ENCODE measurements at regions of chr16 and their contacts with region 1.

Region 1: DNA sequence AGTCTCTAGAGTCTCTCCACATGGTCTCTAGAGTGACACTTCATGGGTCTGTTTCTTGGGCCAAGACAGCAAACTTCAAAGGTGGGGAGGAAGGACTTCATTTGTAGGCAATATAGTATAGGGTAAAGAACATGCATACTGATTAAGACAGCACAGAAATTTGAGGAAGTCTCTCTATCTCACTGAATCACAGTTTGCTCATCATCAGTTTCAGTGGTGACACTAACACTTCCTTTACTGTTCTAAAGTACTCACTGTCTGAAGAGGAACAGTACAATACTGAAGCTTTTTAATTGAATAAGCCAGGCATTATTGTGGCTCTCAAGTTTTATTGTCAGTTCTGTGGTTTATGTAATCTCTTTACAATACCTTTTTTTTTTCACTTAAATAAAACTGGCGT is 656.4 kb upstream of the CDH8 start:
- DNase-seq: no peak
- ATAC-seq: no peak
- H3K4me3 ChIP-seq: no peak overlapping the region
- H3K4me3 Mint-ChIP-seq: no peak overlapping the region
- H3K27ac ChIP-seq: no peak overlapping the region
- H3K27ac Mint-ChIP-seq: no peak overlapping the region
- H3K4me1 ChIP-seq: no peaks in the 10 kb centered on the region
- H3K4me1 Mint-ChIP-seq: no peaks in the 10 kb centered on the region
- H3K27me3 ChIP-seq: no peaks in the 10 kb centered on the region
- H3K27me3 Mint-ChIP-seq: no peaks in the 10 kb centered on the region
- CTCF ChIP-seq: no peak

Region 2: DNA sequence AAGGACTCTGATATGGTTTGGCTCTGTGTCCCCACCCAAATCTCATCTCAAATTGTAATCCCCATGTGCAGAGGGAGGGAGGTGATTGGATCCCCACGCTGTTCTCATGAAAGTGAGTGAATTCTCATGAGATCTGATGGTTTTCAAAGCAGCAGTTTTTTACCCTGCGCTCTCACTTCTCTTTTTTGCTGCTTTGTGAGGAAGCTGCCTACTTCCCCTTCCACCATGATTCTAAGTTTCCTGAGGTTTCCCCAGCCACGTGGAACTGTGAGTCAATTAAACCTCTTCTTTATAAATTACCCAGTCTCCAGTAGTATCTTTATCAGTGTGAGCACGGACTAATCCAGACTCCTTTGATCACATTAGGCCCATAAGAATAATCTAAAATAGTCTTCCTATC is 63.3 kb after region 1 on chr16:
- CTCF ChIA-PET with region 1: no interaction called
- POLR2A ChIA-PET with region 1: no interaction called
- intact Hi-C with region 1: loop called in 1 of 2 experiments (anchors 10 kb)
- DNase-seq: no peak
- ATAC-seq: no peak
- H3K4me3 ChIP-seq: no peak overlapping the region
- H3K4me3 Mint-ChIP-seq: no peak overlapping the region
- H3K27ac ChIP-seq: no peak overlapping the region
- H3K27ac Mint-ChIP-seq: no peak overlapping the region
- H3K4me1 ChIP-seq: no peaks in the 10 kb centered on the region
- H3K4me1 Mint-ChIP-seq: no peaks in the 10 kb centered on the region
- H3K27me3 ChIP-seq: no peaks in the 10 kb centered on the region
- H3K27me3 Mint-ChIP-seq: no peaks in the 10 kb centered on the region
- CTCF ChIP-seq: no peak